HEK293 (cell line): ENCODE measurements at regions of chr6 and their contacts with region 1.

Region 1: DNA sequence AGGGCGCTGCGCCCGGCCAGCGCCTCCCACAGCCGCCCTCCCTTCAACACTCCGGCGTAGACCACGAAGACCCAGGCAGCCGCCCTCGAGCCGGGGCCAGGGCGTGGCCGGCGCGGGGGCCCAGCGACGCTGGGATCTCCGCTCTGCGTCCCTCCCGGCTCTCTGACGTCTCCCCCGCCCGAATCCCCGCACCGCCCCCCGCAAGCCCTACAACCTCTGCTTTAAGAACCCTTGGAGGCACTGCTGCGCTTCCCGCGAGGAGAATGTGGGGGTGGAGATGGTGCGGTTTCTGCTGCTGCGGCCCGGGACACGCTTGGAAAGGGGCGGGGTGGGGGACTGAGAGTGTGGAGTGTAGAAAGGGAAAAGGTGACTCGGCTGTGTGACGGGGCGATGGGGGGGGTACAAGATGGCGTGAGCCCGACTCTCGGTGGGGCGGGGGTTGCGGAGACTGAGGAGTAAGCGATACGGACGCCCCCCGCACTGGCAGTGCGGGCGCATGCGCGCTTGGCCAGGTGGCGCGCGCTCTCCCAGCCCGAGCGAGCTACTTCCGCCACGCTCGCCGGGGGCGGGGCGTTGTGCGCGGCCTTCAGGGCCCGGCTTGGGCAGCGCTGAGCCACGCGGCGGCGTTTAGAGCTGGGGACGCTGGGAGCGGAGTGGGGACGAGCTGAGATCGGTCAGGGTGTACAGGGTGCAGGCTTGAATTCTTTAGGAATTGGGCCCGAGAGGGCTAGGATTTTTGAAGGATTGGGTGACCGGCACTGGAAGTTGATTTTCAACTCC is at the start of gene SUPT3H:
- H3K4me3 ChIP-seq: peak within 1 kb of the TSS; percentile 95
- H3K27ac ChIP-seq: peak within 1 kb of the TSS; percentile 95
- H3K4me1 ChIP-seq: 0 out of 2 replicates have a peak, but pooled peaks cover 4% of the 10 kb centered on the region
- CTCF ChIP-seq: peak; percentile 77; the same call in 1 of the 2 replicates

Region 2: DNA sequence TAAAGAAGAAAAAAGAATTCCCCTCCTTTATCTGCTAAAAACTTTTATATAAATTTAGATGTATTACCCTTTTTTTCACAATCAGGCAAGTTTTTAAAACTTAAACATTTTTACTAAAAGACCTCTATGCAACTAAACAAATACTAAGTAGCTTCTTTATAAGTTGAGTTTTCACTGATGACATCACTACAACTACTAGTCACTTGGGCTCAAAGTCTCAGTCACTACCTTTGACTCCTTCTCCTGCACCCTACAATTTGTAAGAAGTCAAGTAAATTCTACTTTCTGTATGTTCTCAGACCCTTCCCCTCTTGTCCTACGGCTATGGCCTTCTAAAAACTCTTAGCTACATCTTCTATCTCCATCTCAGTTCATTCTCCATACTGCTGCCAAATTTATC is 11.2 kb before region 1 on chr6:
- CTCF ChIA-PET with region 1: interaction called, 6 read pairs
- POLR2A ChIA-PET with region 1: interaction called, 16 read pairs
- H3K4me3 ChIP-seq: no peak overlapping the region
- H3K27ac ChIP-seq: no peak overlapping the region
- H3K4me1 ChIP-seq: peaks cover 4% of the 10 kb centered on the region; the same call in 1 of the 2 replicates
- CTCF ChIP-seq: no peak

Region 3: GRCh38 chr6:45421709-45422502 is 44.2 kb after region 1 on chr6:
- CTCF ChIA-PET with region 1: interaction called, 4 read pairs
- POLR2A ChIA-PET with region 1: interaction called, 20 read pairs
- H3K4me3 ChIP-seq: peak overlapping the region; percentile 87
- H3K27ac ChIP-seq: peak overlapping the region; percentile 81
- H3K4me1 ChIP-seq: peaks cover 9% of the 10 kb centered on the region
- CTCF ChIP-seq: peak; percentile 67